PC-3 (cell line): ENCODE measurements at regions of chr17 and their contacts with region 1.

Region 1: GRCh38 chr17:75720725-75721462 is at the start of gene ITGB4:
- DNase-seq: peak; percentile 96
- ATAC-seq: peak; percentile 62
- H3K4me3 ChIP-seq: peak within 1 kb of the TSS; percentile 97
- H3K27ac ChIP-seq: peak within 1 kb of the TSS; percentile 39
- H3K4me1 ChIP-seq: peaks cover 30% of the 10 kb centered on the region
- H3K27me3 ChIP-seq: no peaks in the 10 kb centered on the region
- CTCF ChIP-seq: no peak
- total RNA-seq, gene ITGB4: 273 and 362 TPM in 2 replicates

Region 2: DNA sequence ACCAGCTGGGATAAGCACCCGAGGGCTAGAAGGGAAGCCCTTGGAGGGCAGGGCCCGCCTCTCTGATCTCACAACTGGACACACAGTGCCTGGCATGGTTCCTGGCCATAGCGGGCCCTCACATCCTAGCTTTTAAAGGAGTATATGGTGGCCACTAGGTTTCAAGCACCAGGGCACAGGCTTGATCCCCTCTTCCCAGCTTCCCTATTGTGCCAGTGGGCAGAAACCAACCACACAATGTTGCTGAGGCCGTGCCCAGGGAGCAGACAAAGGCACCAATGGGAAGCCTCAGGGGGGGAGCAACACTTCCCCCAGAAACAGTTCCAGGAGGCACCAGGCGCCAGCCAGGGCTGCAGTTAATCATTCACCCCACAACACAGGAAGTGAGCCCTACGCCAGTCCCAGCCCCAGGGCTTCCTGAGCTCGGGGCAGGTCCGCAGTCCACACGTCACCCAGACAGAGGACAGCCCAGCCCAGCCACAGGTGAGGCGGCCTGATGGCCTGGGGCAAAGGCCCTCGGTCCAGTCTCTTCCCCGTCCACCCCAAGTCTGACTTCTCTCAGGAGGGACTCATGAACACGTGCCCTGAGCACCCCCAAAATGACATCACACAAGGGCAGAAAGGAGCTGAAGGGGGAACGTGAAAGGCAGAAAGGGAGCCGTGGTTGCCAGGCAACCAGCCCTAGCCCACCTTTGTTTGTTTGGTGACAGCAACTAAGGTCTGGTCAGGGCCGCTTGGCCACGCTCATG is 74.8 kb before region 1 on chr17:
- CTCF ChIA-PET with region 1: interaction called, 3 read pairs
- POLR2A ChIA-PET with region 1: interaction called, 10 read pairs
- intact Hi-C with region 1: no loop called
- DNase-seq: peak; percentile 95
- ATAC-seq: peak; percentile 89
- H3K4me3 ChIP-seq: peak overlapping the region; percentile 6; the same call in 1 of the 2 replicates
- H3K27ac ChIP-seq: peak overlapping the region; percentile 94
- H3K4me1 ChIP-seq: peaks cover 45% of the 10 kb centered on the region
- H3K27me3 ChIP-seq: no peaks in the 10 kb centered on the region
- CTCF ChIP-seq: no peak

Region 3: DNA sequence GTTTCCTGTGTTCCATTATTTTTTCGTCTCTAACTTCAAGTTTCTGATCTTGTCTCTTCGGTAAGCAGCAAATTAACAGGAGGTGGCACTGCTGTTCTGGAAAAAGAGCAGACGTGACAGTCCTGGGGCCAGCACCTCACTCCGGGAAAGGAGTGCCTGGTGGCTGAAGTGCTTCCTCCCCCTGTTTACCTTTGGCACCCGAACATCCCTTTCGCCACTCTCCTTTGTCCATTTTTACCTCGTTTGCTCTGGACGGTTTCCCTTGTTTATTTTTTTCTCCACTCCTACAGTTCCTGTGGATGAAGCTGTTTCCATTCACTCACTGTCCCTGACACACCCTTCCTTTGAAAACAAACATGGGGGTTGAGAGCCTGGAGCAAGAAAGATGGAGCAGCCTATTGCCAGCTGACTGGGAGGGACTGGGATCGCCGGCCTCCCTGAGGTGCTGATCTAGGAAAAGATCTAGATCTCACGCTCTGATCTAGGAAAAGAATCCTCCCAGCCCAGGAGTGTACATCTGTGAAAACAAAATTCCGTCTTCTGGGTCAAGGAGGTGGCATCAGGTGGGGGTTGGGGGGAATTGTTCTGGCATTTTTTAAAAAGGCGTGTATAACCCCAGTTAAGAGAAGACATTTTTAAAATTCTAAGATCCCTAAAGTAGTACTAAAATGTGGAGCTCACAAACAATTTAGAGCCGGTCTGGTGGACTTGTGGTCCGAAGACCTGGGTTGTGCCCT is 41.0 kb before region 1 on chr17:
- CTCF ChIA-PET with region 1: interaction called, 14 read pairs
- POLR2A ChIA-PET with region 1: interaction called, 5 read pairs
- intact Hi-C with region 1: loop called (anchors 1 kb)
- DNase-seq: peak; percentile 91
- ATAC-seq: peak; percentile 77
- H3K4me3 ChIP-seq: 0 out of 2 replicates have a peak overlapping the region, but pooled peaks have one; percentile 34
- H3K27ac ChIP-seq: peak overlapping the region; percentile 39
- H3K4me1 ChIP-seq: peaks cover 57% of the 10 kb centered on the region
- H3K27me3 ChIP-seq: no peaks in the 10 kb centered on the region
- CTCF ChIP-seq: peak; percentile 86

Region 4: GRCh38 chr17:75707131-75707571 is 13.7 kb before region 1 on chr17:
- CTCF ChIA-PET with region 1: interaction called, 5 read pairs
- POLR2A ChIA-PET with region 1: interaction called, 7 read pairs
- intact Hi-C with region 1: loop called (anchors 2 kb)
- DNase-seq: peak; percentile 94
- ATAC-seq: peak; percentile 99
- H3K4me3 ChIP-seq: peak overlapping the region; percentile 16; the same call in 1 of the 2 replicates
- H3K27ac ChIP-seq: peak overlapping the region; percentile 68
- H3K4me1 ChIP-seq: peaks cover 34% of the 10 kb centered on the region
- H3K27me3 ChIP-seq: no peaks in the 10 kb centered on the region
- CTCF ChIP-seq: no peak

Region 5: DNA sequence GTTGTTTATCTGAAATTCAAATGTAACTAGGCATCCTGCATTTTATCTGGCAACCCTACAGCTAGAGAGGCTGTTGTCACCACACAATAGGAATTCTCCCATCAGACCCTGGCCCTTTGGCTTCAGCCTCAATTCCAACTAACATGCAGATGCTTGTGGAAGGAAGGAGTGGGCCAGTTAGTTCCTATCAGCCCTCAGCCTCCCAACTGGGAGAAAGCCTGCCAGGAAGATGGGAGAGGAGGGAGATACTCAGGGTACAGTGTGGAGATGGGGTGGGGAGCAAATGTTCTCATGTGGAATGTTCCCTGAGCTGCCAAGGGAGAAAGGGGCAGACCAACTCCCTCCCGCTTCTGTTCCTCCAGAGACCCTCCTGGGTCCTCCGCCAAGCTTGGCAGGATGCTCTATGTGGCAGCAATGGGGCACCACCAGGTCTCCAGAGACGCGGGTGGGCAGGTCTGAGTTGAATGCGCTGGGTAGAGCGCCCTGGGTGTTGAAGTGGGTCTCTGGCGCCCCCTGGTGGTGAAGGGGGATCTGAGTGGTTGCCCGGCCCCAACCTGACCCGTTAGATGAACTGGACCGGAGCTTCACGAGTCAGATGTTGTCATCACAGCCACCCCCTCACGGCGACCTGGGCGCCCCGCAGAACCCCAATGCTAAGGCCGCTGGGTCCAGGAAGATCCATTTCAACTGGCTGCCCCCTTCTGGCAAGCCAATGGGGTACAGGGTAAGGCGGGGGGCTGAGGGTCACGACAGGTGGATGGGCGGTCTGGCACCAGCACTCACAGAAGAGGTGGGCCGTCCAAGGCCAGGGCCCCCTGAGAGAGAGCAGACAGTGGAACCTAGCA is 28.9 kb after region 1 on chr17:
- CTCF ChIA-PET with region 1: interaction called, 6 read pairs
- POLR2A ChIA-PET with region 1: interaction called, 8 read pairs
- intact Hi-C with region 1: loop called (anchors 2 kb)
- DNase-seq: peak; percentile 79
- ATAC-seq: peak; percentile 78
- H3K4me3 ChIP-seq: no peak overlapping the region
- H3K27ac ChIP-seq: no peak overlapping the region
- H3K4me1 ChIP-seq: no peaks in the 10 kb centered on the region
- H3K27me3 ChIP-seq: no peaks in the 10 kb centered on the region
- CTCF ChIP-seq: peak; percentile 98

Region 6: GRCh38 chr17:76353599-76354316 is 632.9 kb after region 1 on chr17 and contains the start of gene PRPSAP1:
- CTCF ChIA-PET with region 1: no interaction called
- POLR2A ChIA-PET with region 1: no interaction called
- intact Hi-C with region 1: no loop called
- DNase-seq: peak; percentile 97
- ATAC-seq: peak; percentile 90
- H3K4me3 ChIP-seq: peak within 1 kb of the TSS; percentile 92
- H3K27ac ChIP-seq: peak within 1 kb of the TSS; percentile 81
- H3K4me1 ChIP-seq: peaks cover 24% of the 10 kb centered on the region
- H3K27me3 ChIP-seq: no peaks in the 10 kb centered on the region
- CTCF ChIP-seq: no peak
- total RNA-seq, gene PRPSAP1: 43.9 and 47.8 TPM in 2 replicates